ENCODE measurements at regions of chr19 and their contacts with region 1.

Region 1: GRCh38 chr19:1241417-1242095 is at the start of gene ATP5F1D:
- DNase-seq: peak; percentile 96
- ATAC-seq: peak; percentile 73
- H3K4me3 Mint-ChIP-seq: peak within 1 kb of the TSS; percentile 88
- H3K27ac Mint-ChIP-seq: peak within 1 kb of the TSS; percentile 94
- H3K4me1 Mint-ChIP-seq: peaks cover 37% of the 10 kb centered on the region
- H3K27me3 Mint-ChIP-seq: peaks cover 14% of the 10 kb centered on the region
- total RNA-seq, gene ATP5F1D: 209 to 222 TPM

Region 2: GRCh38 chr19:1213391-1214286 is 27.9 kb before region 1 on chr19:
- CTCF ChIA-PET with region 1: interaction called, 10 read pairs
- POLR2A ChIA-PET with region 1: no interaction called
- DNase-seq: peak; percentile 58
- ATAC-seq: peak; percentile 65
- H3K4me3 Mint-ChIP-seq: peak overlapping the region; percentile 60
- H3K27ac Mint-ChIP-seq: peak overlapping the region; percentile 91
- H3K4me1 Mint-ChIP-seq: peaks cover 35% of the 10 kb centered on the region
- H3K27me3 Mint-ChIP-seq: no peaks in the 10 kb centered on the region

Region 3: GRCh38 chr19:1260636-1261537 is 19.3 kb after region 1 on chr19:
- CTCF ChIA-PET with region 1: interaction called, 606 read pairs
- POLR2A ChIA-PET with region 1: interaction called, 218 read pairs
- DNase-seq: peak; percentile 98
- ATAC-seq: peak; percentile 78
- H3K4me3 Mint-ChIP-seq: peak overlapping the region; percentile 97
- H3K27ac Mint-ChIP-seq: peak overlapping the region; percentile 97
- H3K4me1 Mint-ChIP-seq: peaks cover 71% of the 10 kb centered on the region
- H3K27me3 Mint-ChIP-seq: no peaks in the 10 kb centered on the region

Region 4: DNA sequence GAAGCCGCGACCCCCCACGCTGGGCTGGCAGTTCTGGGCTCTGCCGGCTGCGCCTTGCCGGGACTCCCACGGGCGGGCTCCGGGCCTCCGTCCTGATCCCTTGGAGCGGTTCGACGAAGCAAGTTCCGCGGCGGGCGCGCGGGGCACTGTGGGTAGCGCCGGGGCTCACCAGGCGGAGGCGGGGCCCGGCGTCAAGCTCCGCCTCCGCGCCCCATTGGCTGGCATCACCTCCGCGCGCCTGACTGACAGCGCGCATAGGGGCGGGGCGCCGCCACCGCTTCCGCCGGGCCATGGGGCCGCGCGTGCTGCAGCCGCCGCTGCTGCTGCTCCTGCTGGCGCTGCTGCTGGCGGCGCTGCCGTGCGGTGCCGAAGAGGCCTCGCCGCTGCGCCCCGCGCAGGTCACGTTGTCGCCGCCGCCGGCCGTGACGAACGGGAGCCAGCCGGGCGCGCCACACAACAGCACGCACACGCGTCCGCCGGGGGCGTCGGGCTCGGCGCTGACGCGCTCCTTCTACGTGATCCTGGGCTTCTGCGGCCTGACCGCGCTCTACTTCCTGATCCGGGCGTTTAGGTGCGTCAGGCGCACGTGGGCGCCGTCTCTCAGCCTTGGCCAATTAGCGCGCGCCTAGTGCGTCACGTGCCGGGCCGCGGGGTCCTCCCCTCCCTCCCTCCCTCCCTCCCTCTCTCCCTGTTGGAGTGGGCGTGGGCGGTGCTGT is 33.9 kb after region 1 on chr19 and contains the start of gene FAM174C:
- CTCF ChIA-PET with region 1: interaction called, 57 read pairs
- POLR2A ChIA-PET with region 1: interaction called, 13 read pairs
- DNase-seq: peak; percentile 98
- ATAC-seq: peak; percentile 82
- H3K4me3 Mint-ChIP-seq: peak within 1 kb of the TSS; percentile 79
- H3K27ac Mint-ChIP-seq: peak within 1 kb of the TSS; percentile 95
- H3K4me1 Mint-ChIP-seq: peaks cover 54% of the 10 kb centered on the region
- H3K27me3 Mint-ChIP-seq: no peaks in the 10 kb centered on the region
- total RNA-seq, gene FAM174C: 57.1 TPM

Region 5: GRCh38 chr19:1507763-1508509 is 266.4 kb after region 1 on chr19:
- CTCF ChIA-PET with region 1: no interaction called
- POLR2A ChIA-PET with region 1: no interaction called
- DNase-seq: peak; percentile 90
- ATAC-seq: peak; percentile 84
- H3K4me3 Mint-ChIP-seq: peak overlapping the region; percentile 71
- H3K27ac Mint-ChIP-seq: peak overlapping the region; percentile 88
- H3K4me1 Mint-ChIP-seq: peaks cover 26% of the 10 kb centered on the region
- H3K27me3 Mint-ChIP-seq: peaks cover 20% of the 10 kb centered on the region